Right lobe of liver (tissue), 6 donors: ENCODE measurements at regions of chr16 and their contacts with region 1.

Region 1: DNA sequence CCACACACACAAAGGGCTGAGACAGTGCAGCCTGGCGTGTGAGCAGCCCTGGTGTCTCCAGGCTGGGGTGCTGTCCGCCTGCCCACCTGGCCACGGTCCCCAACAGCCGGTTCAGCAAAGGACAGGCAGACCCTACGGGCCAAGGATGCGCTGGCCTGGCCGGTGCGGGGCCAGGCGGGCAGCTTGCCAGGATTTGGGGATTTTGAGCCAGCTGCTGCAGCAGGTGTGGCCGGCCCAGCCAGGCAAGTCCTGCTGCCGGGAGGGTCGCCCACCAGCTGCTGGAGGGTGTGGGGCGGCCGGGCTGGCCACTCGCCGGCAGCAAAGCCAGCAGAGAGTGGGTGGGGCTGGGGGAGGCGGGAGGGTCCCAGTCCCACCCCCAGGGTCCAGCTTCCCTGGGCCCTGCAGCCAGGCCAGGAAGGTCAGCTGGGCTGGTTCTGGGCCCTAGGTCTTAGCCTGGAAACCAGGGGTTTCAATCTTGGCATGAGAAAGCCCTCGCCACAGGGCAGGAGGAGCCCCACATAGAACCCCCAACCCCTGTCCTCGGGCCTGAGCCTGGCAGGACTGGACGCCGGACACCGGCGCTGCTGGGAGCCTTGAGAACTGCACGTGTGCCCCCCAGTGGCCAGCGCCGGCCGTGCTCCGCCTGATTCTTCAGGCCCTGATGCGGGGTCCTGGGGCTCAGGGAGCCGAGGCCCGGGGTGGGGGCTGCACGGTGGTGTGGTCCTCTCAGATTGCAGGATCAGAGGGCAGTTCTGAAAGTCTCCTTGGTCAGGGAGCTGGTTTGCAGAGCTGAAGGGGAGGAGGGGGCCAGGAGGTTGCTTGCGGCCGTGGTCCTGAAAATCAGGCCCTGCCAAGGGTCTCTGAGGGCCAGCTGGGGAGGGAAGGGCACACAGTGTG is 17.6 kb upstream of the SSTR5 start:
- DNase-seq: peak; percentile 70 to 73 (median 72)
- ATAC-seq: peak; percentile 76 to 87 (median 84)
- H3K4me3 ChIP-seq: no peak overlapping the region
- H3K27ac ChIP-seq: no peak overlapping the region
- H3K4me1 ChIP-seq: no peaks in the 10 kb centered on the region
- H3K27me3 ChIP-seq: no peaks in the 10 kb centered on the region
- CTCF ChIP-seq: peak; percentile 74 to 82 (median 76)
- POLR2A ChIP-seq: no peak

Region 2: DNA sequence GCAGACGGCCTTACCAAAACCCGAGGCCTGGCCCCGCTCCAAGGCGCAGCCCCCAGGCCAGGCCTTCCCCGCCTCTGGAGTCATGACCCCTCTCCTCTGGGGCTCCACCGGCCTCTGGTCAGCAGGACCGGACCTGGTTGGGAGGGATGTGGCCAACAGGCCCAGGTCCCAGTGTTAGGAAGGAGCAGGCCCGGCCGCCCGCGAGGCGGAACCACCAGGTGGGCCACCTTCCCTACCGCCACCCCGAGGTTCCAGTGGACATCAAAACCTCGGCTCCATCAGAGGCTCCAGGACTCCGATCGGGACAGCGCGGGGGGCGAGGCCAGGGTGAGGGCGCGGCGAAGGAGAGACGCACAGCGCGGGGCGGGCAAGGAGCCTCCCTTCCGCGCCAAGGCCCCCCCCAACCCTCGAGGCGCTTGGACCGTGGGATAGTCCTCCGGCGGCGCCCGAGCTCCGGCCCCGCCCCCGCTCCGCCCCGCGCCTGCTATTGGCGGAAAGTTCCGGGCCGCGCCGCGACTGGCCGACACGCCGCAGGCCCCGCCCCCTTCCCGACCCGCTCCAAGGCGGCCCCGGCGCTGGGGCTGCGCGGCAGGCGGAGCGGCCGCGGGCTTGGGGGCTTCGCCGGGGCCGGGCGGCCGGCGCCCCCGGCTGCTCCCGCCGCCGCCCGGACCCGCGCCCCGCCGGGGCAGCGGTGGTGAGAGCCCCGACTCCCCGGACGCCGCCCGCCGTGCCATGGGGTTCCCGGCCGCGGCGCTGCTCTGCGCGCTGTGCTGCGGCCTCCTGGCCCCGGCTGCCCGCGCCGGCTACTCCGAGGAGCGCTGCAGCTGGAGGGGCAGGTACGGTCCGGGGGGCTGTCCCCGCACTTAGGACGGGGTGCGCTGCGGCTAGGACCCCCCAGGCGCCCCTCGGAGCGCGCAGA is 340.1 kb before region 1 on chr16 and contains the start of gene METRN:
- intact Hi-C with region 1: loop called (anchors 5 kb)
- DNase-seq: peak; percentile 90 to 94 (median 93)
- ATAC-seq: peak; percentile 79 to 90 (median 84)
- H3K4me3 ChIP-seq: peak within 1 kb of the TSS; percentile 54 to 63 (median 58)
- H3K27ac ChIP-seq: no peak within 1 kb of the TSS
- H3K4me1 ChIP-seq: peaks cover 0 to 20% (median 2%) of the 10 kb centered on the region in 4 donors
- H3K27me3 ChIP-seq: no peaks in the 10 kb centered on the region
- CTCF ChIP-seq: no peak
- POLR2A ChIP-seq: no peak
- total RNA-seq, gene METRN: 14.0 to 43.7 (median 26.2) TPM

Region 3: GRCh38 chr16:813204-813915 is 241.5 kb before region 1 on chr16:
- intact Hi-C with region 1: loop called in 1 of 2 experiments (anchors 5 kb)
- DNase-seq: peak in 1 of 3 donors; percentile 45
- ATAC-seq: peak; percentile 47 to 71 (median 54)
- H3K4me3 ChIP-seq: no peak overlapping the region
- H3K27ac ChIP-seq: no peak overlapping the region
- H3K4me1 ChIP-seq: no peaks in the 10 kb centered on the region
- H3K27me3 ChIP-seq: no peaks in the 10 kb centered on the region
- CTCF ChIP-seq: peak; percentile 29 to 44 (median 40)
- POLR2A ChIP-seq: no peak

Region 4: GRCh38 chr16:1105888-1106620 is 51.1 kb after region 1 on chr16:
- intact Hi-C with region 1: no loop called
- DNase-seq: peak; percentile 73 to 76 (median 75)
- ATAC-seq: peak; percentile 79 to 87 (median 84)
- H3K4me3 ChIP-seq: no peak overlapping the region
- H3K27ac ChIP-seq: no peak overlapping the region
- H3K4me1 ChIP-seq: peaks cover 0 to 3% (median 2%) of the 10 kb centered on the region in 4 donors
- H3K27me3 ChIP-seq: peaks cover 6 to 10% of the 10 kb centered on the region in 2 donors
- CTCF ChIP-seq: peak; percentile 78 to 91 (median 88)
- POLR2A ChIP-seq: no peak

Region 5: GRCh38 chr16:1188432-1189189 is 133.7 kb after region 1 on chr16:
- intact Hi-C with region 1: no loop called
- DNase-seq: peak in 1 of 3 donors; percentile 55
- ATAC-seq: peak; percentile 7 to 73 (median 56)
- H3K4me3 ChIP-seq: no peak overlapping the region
- H3K27ac ChIP-seq: no peak overlapping the region
- H3K4me1 ChIP-seq: peaks cover 0 to 34% (median 0%) of the 10 kb centered on the region in 4 donors
- H3K27me3 ChIP-seq: no peaks in the 10 kb centered on the region
- CTCF ChIP-seq: no peak
- POLR2A ChIP-seq: no peak